SK-N-SH (cell line): ENCODE measurements at regions of chr2 and their contacts with region 1.

Region 1: GRCh38 chr2:33475224-33476130 is 972 bp upstream of the RASGRP3 start:
- DNase-seq: peak; percentile 55
- H3K4me3 ChIP-seq: peak overlapping the region; percentile 60 to 86
- H3K27ac ChIP-seq: peak overlapping the region; percentile 73 to 80
- H3K4me1 ChIP-seq: peaks cover 0 to 10% of the 10 kb centered on the region in 2 experiments; a peak in 1 of 4 replicates
- H3K27me3 ChIP-seq: no peaks in the 10 kb centered on the region
- CTCF ChIP-seq: peak; percentile 96
- EP300 ChIP-seq: no peak
- RAD21 ChIP-seq: peak; percentile 67

Region 2: DNA sequence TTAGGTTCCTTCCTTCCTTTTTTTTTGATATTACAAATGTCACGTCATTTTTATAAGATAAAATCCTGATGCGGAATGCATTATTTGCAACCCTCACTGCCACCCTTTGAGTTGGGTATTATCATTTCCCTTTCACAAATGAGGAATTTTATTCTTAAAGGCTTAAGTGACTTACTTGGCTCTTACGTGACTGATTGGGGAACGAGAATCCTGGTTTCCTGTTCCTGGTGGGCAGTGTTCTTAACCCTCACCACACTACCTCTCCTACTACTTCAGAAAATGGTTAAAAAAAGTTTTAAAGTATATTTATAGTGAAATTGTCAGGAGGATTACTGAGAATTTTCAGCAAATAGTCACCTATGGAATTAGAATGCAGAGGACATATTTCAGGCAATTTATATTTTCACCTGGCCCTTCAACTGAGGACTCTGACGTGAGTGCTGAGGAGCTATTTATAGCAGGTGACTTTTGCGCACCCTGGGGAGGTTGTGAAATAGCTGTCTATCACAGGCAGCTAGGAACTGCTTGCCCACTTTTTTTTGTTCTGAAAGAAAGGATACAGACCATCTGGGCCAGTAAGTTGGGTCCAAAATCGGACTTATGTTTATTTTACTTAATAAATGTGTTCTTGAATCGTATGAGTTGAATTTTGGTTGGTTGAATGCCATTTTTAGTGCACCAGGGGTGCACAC is 17.8 kb before region 1 on chr2:
- CTCF ChIA-PET with region 1: interaction called, 21 read pairs
- POLR2A ChIA-PET with region 1: no interaction called
- DNase-seq: no peak
- H3K4me3 ChIP-seq: no peak overlapping the region
- H3K27ac ChIP-seq: no peak overlapping the region
- H3K4me1 ChIP-seq: no peaks in the 10 kb centered on the region
- H3K27me3 ChIP-seq: no peaks in the 10 kb centered on the region
- CTCF ChIP-seq: no peak
- EP300 ChIP-seq: no peak
- RAD21 ChIP-seq: no peak

Region 3: DNA sequence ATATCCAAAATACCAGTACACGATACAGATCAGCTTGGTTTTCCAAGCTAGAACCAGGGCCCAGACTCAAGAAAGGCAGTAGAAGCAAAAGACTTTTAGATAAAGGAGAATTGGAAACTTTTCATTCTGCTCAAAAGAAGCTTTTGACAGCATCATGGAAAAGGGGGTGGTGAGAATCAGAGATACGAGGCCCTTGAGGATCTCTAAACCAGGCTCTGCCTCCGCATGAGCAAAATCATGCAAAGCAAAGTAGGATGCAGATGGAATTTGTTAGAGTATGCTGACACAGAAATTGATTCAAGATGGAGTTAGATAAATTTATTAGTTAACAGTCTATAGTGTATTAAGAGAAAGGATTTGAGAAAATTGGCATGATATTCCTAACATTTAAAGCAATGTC is 83.9 kb after region 1 on chr2:
- CTCF ChIA-PET with region 1: interaction called, 10 read pairs
- POLR2A ChIA-PET with region 1: no interaction called
- DNase-seq: no peak
- H3K4me3 ChIP-seq: no peak overlapping the region
- H3K27ac ChIP-seq: no peak overlapping the region
- H3K4me1 ChIP-seq: no peaks in the 10 kb centered on the region; a peak in 1 of 4 replicates
- H3K27me3 ChIP-seq: no peaks in the 10 kb centered on the region
- CTCF ChIP-seq: no peak
- EP300 ChIP-seq: no peak
- RAD21 ChIP-seq: no peak

Region 4: GRCh38 chr2:33727361-33728032 is 252.0 kb after region 1 on chr2:
- CTCF ChIA-PET with region 1: no interaction called
- POLR2A ChIA-PET with region 1: no interaction called
- DNase-seq: no peak
- H3K4me3 ChIP-seq: no peak overlapping the region
- H3K27ac ChIP-seq: no peak overlapping the region
- H3K4me1 ChIP-seq: no peaks in the 10 kb centered on the region
- H3K27me3 ChIP-seq: no peaks in the 10 kb centered on the region
- CTCF ChIP-seq: no peak
- EP300 ChIP-seq: no peak
- RAD21 ChIP-seq: no peak